ENCODE measurements at regions of chr3 and their contacts with region 1.

Region 1: GRCh38 chr3:172698631-172699030 is 12.2 kb downstream of the NCEH1 start:
- DNase-seq: no peak
- CTCF ChIP-seq: no peak

Region 2: GRCh38 chr3:172685346-172686214 is 13.1 kb before region 1 on chr3:
- CTCF ChIA-PET with region 1: interaction called, 17 read pairs
- POLR2A ChIA-PET with region 1: no interaction called
- DNase-seq: no peak
- CTCF ChIP-seq: no peak

Region 3: DNA sequence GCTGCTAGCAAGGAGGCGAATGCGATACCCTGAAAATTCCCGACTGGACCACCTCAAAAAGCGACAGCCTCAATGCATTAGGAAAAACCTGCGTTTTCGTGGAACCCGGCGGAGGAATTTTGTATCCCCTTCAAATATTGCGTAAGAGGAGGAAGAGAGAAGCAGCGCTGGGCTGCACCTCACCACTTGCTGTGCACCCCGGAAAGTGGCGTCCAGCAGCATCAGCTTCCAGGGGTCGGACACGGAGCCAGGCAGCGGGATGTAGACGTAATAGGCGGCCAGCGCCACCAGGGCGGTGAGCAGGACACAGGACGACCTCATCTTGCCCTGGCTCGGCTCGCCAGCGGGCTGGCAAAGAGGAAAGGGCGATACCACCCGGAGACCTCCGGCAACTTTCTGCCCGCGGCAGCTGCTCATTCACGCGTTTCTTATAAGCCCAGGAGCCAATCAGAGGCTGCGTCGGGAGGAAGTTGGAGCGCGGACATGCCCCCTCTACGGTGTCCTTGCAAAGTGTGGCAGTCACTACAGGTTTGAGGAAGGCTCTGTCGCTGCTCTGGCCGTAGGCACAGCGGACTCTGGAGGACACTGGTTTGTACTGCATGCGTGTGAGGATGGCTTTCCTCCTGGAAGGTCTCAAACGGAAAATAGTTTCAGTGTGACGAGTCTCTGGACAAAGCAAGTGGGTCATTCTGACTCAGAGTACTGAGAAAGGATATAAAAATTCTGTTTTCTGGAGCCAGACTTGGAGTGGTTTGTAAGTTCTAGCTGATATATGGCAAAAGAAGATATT is 12.2 kb after region 1 on chr3 and contains the start of gene NCEH1:
- CTCF ChIA-PET with region 1: interaction called, 22 read pairs
- POLR2A ChIA-PET with region 1: no interaction called
- DNase-seq: peak; percentile 91
- CTCF ChIP-seq: peak; percentile 83

Measured in GM10248 (cell line).